ENCODE measurements at regions of chr16 and their contacts with region 1.

Region 1: DNA sequence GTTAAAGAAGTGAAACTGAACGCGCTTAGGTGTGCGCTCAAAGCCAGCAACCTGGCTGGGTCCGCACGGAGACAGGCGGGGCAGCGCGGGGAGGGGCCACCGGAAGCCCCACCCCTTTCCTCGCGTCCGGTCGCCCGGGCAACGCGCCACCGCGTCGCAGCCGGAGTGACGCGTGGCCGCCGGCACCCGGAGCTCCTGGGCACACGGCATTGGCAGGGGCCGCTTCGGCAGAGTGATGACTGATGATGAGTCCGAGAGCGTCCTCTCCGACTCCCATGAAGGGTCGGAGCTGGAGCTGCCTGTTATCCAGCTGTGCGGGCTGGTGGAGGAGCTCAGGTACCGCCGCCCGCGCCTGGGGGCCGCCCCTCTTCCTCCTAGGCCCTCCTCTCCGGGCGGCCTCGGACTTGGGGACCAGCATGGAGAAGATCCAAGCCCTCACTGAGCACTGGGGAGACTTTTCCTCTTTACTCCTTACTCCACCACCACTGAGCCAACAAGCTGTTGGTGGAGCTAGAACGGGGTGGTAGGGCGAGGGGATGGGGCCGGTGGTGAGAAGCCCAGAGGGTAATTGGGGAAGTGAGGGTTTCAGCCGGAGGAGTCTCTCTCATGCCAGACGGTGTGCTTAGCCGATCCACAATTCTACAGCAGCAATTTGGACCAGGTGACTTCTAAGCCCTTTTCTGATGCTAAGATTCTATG is 44.9 kb downstream of the PRSS54 start:
- DNase-seq: peak; percentile 94
- ATAC-seq: peak; percentile 96
- H3K4me3 ChIP-seq: peak overlapping the region in 4 of 5 experiments; percentile 52 to 71 (median 68)
- H3K4me3 Mint-ChIP-seq: peak overlapping the region; percentile 89
- H3K27ac ChIP-seq: peak overlapping the region in 1 of 2 donors; percentile 56
- H3K27ac Mint-ChIP-seq: peak overlapping the region; percentile 77
- H3K4me1 ChIP-seq: peaks cover 7 to 16% of the 10 kb centered on the region in 2 donors
- H3K4me1 Mint-ChIP-seq: peaks cover 19% of the 10 kb centered on the region
- H3K27me3 ChIP-seq: no peaks in the 10 kb centered on the region
- H3K27me3 Mint-ChIP-seq: no peaks in the 10 kb centered on the region
- CTCF ChIP-seq: no peak

Region 2: GRCh38 chr16:57544119-57544653 is 705.7 kb before region 1 on chr16:
- CTCF ChIA-PET with region 1: no interaction called
- POLR2A ChIA-PET with region 1: no interaction called
- intact Hi-C with region 1: loop called (anchors 10 kb)
- DNase-seq: peak; percentile 91
- ATAC-seq: peak; percentile 77
- H3K4me3 ChIP-seq: peak overlapping the region; percentile 59 to 92 (median 84)
- H3K4me3 Mint-ChIP-seq: peak overlapping the region; percentile 76
- H3K27ac ChIP-seq: peak overlapping the region; percentile 5 to 72
- H3K27ac Mint-ChIP-seq: peak overlapping the region; percentile 93
- H3K4me1 ChIP-seq: peaks cover 73 to 83% of the 10 kb centered on the region in 2 donors
- H3K4me1 Mint-ChIP-seq: peaks cover 76% of the 10 kb centered on the region
- H3K27me3 ChIP-seq: no peaks in the 10 kb centered on the region
- H3K27me3 Mint-ChIP-seq: no peaks in the 10 kb centered on the region
- CTCF ChIP-seq: no peak

Region 3: GRCh38 chr16:58198022-58198683 is 51.8 kb before region 1 on chr16 and contains the start of gene CSNK2A2:
- CTCF ChIA-PET with region 1: interaction called, 4 read pairs
- POLR2A ChIA-PET with region 1: interaction called, 9 read pairs
- intact Hi-C with region 1: loop called (anchors 1 kb)
- DNase-seq: peak; percentile 82
- ATAC-seq: peak; percentile 93
- H3K4me3 ChIP-seq: peak within 1 kb of the TSS; percentile 44 to 83 (median 64)
- H3K4me3 Mint-ChIP-seq: peak within 1 kb of the TSS; percentile 90
- H3K27ac ChIP-seq: peak within 1 kb of the TSS in 1 of 2 donors; percentile 55
- H3K27ac Mint-ChIP-seq: peak within 1 kb of the TSS; percentile 81
- H3K4me1 ChIP-seq: peaks cover 15 to 18% of the 10 kb centered on the region in 2 donors
- H3K4me1 Mint-ChIP-seq: peaks cover 33% of the 10 kb centered on the region
- H3K27me3 ChIP-seq: peaks cover 0 to 7% (median 2%) of the 10 kb centered on the region in 4 experiments
- H3K27me3 Mint-ChIP-seq: peaks cover 10% of the 10 kb centered on the region
- CTCF ChIP-seq: no peak
- total RNA-seq, gene CSNK2A2: 63.5 and 69.4 TPM in 2 replicates

Region 4: DNA sequence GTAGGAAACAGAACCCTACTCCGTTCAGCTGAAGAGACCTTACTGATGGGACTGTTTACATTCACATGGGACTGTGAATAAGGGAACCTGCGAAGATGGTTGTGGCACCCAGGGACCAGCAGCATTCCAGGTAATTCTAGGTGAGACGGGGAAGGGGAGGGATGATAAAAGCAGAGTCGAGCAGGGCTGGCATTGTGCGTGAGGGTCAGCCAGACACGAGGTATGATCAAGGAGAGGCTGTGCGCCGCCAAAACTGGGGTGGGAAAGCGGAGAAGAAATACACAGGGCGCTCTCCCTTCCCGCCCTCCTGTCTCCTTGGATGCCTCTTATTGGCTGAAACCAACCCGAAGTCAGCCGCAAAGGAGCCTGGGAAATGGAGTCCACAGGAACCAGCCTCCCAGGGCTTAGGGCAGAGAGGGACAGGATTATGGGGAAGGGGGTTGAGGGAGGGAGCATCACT is 13.7 kb before region 1 on chr16:
- CTCF ChIA-PET with region 1: no interaction called
- POLR2A ChIA-PET with region 1: no interaction called
- intact Hi-C with region 1: loop called (anchors 1 kb)
- DNase-seq: peak; percentile 66
- ATAC-seq: peak; percentile 97
- H3K4me3 ChIP-seq: peak overlapping the region; percentile 40 to 69 (median 51)
- H3K4me3 Mint-ChIP-seq: peak overlapping the region; percentile 89
- H3K27ac ChIP-seq: no peak overlapping the region
- H3K27ac Mint-ChIP-seq: no peak overlapping the region
- H3K4me1 ChIP-seq: peaks cover 11 to 13% of the 10 kb centered on the region in 2 donors
- H3K4me1 Mint-ChIP-seq: peaks cover 13% of the 10 kb centered on the region
- H3K27me3 ChIP-seq: peaks cover 0 to 21% (median 3%) of the 10 kb centered on the region in 4 experiments
- H3K27me3 Mint-ChIP-seq: peaks cover 26% of the 10 kb centered on the region
- CTCF ChIP-seq: no peak

Measured in B cell (primary cell).